ENCODE measurements at regions of chr17 and their contacts with region 1.

Region 1: DNA sequence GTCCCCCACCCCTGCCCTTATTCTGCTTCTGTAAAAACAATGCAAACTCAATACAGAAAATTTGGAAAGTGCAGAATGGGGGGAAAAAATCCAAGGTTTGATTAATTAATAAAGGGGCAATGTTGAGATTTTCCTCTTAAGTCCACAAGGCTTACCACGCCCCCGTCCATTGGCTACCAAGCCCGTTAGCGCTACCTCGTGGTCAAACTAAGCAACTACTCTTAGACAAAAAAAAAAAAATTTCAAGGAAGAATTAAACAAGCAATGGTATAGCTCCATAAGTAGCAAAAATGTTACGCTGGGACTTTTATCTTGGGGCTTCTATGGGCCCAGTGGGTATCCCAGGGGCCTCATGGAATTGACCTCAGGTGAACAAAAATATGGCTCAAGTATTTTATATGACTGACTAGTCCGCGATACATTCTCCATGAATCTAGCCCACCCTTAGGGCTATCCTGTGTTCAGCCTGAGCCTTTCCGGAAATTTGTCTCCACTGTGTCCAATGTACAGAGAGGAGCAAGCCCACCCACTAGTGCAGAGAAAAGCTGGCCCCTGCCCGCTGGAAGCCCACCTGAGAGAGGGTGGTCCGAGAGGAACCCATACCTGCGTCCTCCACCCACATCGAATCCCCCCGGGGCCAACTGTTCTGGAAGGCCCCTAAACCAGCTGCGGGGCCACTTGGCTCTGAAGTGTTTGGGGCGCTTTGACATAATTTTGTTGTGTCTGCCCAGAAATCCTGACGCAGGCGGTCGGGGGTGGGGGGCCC is 19.1 kb upstream of the TEX2 start:
- DNase-seq: peak in 1 of 2 donors; percentile 72
- H3K4me3 ChIP-seq: no peak overlapping the region
- H3K27ac ChIP-seq: no peak overlapping the region
- H3K4me1 ChIP-seq: no peaks in the 10 kb centered on the region
- H3K27me3 ChIP-seq: no peaks in the 10 kb centered on the region
- CTCF ChIP-seq: peak; percentile 71 to 85 (median 73)

Region 2: DNA sequence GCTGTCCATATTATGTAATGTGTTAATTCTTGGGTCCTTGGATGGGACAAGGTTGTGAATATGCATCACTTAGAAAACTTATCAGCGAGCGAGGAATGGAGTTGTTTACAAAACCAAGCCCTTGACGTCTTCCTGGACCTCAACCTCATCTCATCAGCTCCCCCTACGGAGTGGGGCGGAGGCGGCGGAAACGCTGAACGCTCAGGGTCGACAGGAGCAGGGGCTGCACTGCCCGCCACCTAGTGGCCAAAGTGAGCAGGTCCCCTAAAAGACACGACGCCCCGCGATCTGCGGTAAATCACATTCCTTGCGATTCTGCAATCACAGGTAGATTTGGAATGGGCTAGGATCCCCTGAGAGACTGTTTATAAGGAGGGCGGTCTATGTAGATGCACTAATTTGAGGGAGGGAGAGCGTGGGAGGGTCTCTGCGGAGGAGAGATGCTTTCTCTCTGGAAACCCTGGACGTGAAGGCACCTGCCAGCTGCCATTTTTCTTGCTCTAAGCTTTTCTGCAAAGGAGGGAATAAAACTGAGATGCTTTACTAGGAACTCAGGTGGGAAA is 256.3 kb before region 1 on chr17:
- intact Hi-C with region 1: loop called (anchors 10 kb)
- DNase-seq: peak; percentile 46 to 87
- H3K4me3 ChIP-seq: peak overlapping the region; percentile 29 to 33
- H3K27ac ChIP-seq: no peak overlapping the region
- H3K4me1 ChIP-seq: peaks cover 0 to 3% of the 10 kb centered on the region in 2 donors
- H3K27me3 ChIP-seq: no peaks in the 10 kb centered on the region
- CTCF ChIP-seq: peak; percentile 88 to 95 (median 91)

Region 3: GRCh38 chr17:64056269-64057005 is 225.7 kb before region 1 on chr17:
- intact Hi-C with region 1: loop called (anchors 10 kb)
- DNase-seq: no peak
- H3K4me3 ChIP-seq: no peak overlapping the region
- H3K27ac ChIP-seq: no peak overlapping the region
- H3K4me1 ChIP-seq: no peaks in the 10 kb centered on the region
- H3K27me3 ChIP-seq: no peaks in the 10 kb centered on the region
- CTCF ChIP-seq: no peak

Region 4: DNA sequence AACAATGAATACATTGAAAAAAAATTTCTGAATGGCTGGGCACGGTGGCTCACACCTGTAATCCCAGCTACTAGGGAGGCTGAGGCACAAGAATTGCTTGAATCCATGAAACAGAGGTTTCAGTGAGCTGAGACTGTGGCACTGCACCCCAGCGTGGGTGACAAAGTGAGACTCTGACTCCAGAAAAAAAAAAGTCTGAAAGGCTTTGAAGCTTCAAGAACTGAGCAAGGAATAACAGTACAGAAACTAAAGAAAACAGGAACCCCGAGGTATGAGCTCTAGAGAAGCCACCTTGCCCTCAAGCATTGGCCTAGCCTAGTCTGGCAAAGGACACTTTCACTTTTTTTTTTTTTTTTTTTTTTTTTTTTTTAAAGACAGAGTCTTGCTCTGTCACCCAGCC is 64.1 kb before region 1 on chr17:
- intact Hi-C with region 1: no loop called
- DNase-seq: no peak
- H3K4me3 ChIP-seq: no peak overlapping the region
- H3K27ac ChIP-seq: peak overlapping the region in 1 of 2 donors; percentile 85
- H3K4me1 ChIP-seq: peaks cover 11 to 39% of the 10 kb centered on the region in 2 donors
- H3K27me3 ChIP-seq: no peaks in the 10 kb centered on the region
- CTCF ChIP-seq: no peak

Measured in ascending aorta (tissue), 2 donors.